ENCODE measurements at regions of chr3 and their contacts with region 1.

Region 1: GRCh38 chr3:170811928-170812591 is 57.9 kb downstream of the RPL22L1 start:
- DNase-seq: peak; percentile 61
- H3K4me3 ChIP-seq: no peak overlapping the region
- H3K27ac ChIP-seq: no peak overlapping the region
- H3K27me3 ChIP-seq: no peaks in the 10 kb centered on the region
- CTCF ChIP-seq: peak; percentile 92

Region 2: GRCh38 chr3:170414202-170414663 is 397.8 kb before region 1 on chr3:
- CTCF ChIA-PET with region 1: interaction called, 366 read pairs
- POLR2A ChIA-PET with region 1: interaction called, 4 read pairs
- DNase-seq: peak; percentile 82
- H3K4me3 ChIP-seq: no peak overlapping the region
- H3K27ac ChIP-seq: no peak overlapping the region
- H3K27me3 ChIP-seq: no peaks in the 10 kb centered on the region
- CTCF ChIP-seq: peak; percentile 100

Region 3: DNA sequence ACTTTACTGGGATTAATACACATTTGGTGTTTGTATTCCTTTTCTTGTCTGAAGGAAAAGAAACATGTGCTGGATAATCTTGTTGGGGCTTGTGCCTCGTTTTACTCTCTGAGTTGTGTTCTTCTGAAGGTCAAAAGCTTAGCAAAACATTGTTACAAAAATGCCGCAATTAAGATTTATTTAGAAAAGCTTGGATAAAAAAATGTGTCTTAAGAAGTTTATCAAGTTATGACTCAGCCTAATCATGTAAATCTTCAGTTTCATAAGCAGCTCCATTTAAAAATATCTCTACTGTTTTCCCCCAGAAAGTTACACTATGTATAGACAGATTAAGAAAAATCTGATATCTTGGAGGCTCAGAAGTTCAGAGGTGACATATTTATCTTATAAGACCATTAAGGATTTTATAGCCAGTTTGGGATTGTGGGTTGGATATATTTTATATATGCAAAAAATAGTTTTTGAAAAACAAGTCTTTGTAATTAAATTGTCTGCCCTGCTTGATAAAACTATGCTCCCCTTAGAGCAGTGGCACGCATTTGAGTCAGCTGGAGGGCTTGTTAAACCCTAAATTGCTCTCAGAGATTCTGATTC is 336.9 kb before region 1 on chr3:
- CTCF ChIA-PET with region 1: interaction called, 13 read pairs
- POLR2A ChIA-PET with region 1: no interaction called
- DNase-seq: peak; percentile 27
- H3K4me3 ChIP-seq: no peak overlapping the region
- H3K27ac ChIP-seq: no peak overlapping the region
- H3K27me3 ChIP-seq: no peaks in the 10 kb centered on the region
- CTCF ChIP-seq: no peak

Region 4: DNA sequence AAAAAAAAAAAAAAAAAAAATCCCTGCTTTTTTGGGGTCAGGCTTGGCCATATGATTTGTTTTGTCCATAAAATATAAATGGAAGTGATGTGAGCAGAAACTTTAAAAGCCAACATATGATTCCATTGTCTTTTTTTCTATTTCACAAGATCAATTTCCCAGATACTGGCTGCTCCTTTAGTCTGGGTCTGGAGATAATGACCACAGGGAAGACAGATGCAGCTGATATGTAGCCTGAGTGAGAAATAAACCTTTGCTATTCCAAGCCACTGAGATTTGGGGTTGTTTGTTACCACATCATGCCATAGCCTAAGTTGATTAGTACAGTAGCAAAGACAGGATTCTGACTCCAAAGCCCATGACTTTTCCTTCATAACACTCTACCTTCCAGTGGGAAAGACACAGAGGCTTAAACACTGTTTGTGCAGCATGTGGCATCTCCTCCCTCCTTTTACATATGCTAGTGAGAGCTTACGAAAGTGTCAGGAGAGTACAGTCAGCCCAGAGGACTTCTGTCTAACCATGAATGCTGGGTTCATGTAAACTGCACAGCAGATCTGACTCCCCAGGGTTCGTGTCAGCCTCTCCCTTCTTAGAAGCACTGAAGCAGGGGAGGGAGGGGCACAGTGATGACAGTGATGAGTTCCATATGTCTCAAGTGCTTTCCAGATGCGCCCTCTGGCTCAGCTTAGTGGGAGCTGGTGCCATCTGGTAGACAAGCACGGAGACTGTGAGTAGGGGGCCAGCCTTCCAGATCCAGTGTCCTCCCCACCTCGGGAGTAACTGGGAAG is 189.5 kb before region 1 on chr3:
- CTCF ChIA-PET with region 1: interaction called, 10 read pairs
- POLR2A ChIA-PET with region 1: no interaction called
- DNase-seq: peak; percentile 98
- H3K4me3 ChIP-seq: no peak overlapping the region
- H3K27ac ChIP-seq: peak overlapping the region; percentile 86
- H3K27me3 ChIP-seq: no peaks in the 10 kb centered on the region
- CTCF ChIP-seq: no peak

Region 5: DNA sequence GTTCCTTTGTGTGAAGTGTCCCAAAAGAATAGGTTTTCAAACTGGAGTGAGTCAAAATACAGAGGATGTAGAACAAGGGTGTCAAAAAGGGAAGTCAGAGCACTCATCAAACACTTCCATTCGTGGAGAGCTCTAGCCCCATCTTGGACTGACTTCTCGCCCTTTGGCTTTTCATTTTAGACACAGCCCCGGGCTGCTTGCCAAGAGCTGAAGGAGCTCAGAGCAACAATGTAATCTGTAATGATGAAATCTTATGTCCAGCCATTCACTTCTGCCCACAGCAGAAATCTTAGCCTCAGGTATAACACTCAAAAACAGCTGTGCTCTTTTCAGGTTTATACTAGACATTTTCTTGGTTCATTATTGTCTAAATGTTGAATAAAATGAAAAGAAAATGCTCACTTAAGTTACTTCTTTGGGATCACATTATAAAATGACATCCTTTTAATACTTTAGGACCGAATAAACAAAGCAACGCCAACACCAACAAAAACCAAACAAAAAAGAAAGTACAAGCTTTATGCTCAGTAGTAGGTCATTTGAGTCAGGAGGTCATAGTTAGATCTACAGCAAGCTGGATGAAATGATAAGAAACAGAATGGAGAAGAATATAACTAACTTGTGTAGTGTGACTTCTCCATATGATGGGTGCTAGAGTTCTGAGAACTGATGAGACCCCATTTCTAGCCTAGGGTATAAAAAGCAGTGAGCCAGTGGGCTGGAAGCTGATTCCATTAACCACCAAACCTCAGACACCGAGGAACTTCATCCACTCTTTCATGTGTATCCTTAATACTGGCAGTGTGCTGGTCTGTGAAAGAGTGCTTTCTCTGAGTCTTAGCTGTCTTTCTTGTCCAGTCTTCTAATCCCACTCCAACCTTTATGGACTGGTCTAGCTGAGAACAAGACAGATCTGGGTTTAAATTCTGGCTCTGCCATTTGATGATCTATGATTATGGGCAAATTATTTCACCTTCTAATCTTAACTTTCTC is 94.4 kb before region 1 on chr3:
- CTCF ChIA-PET with region 1: interaction called, 23 read pairs
- POLR2A ChIA-PET with region 1: no interaction called
- DNase-seq: no peak
- H3K4me3 ChIP-seq: no peak overlapping the region
- H3K27ac ChIP-seq: no peak overlapping the region
- H3K27me3 ChIP-seq: no peaks in the 10 kb centered on the region
- CTCF ChIP-seq: no peak

Region 6: GRCh38 chr3:170772175-170772574 is 39.9 kb before region 1 on chr3:
- CTCF ChIA-PET with region 1: no interaction called
- POLR2A ChIA-PET with region 1: no interaction called
- DNase-seq: no peak
- H3K4me3 ChIP-seq: no peak overlapping the region
- H3K27ac ChIP-seq: no peak overlapping the region
- H3K27me3 ChIP-seq: no peaks in the 10 kb centered on the region
- CTCF ChIP-seq: no peak

Region 7: DNA sequence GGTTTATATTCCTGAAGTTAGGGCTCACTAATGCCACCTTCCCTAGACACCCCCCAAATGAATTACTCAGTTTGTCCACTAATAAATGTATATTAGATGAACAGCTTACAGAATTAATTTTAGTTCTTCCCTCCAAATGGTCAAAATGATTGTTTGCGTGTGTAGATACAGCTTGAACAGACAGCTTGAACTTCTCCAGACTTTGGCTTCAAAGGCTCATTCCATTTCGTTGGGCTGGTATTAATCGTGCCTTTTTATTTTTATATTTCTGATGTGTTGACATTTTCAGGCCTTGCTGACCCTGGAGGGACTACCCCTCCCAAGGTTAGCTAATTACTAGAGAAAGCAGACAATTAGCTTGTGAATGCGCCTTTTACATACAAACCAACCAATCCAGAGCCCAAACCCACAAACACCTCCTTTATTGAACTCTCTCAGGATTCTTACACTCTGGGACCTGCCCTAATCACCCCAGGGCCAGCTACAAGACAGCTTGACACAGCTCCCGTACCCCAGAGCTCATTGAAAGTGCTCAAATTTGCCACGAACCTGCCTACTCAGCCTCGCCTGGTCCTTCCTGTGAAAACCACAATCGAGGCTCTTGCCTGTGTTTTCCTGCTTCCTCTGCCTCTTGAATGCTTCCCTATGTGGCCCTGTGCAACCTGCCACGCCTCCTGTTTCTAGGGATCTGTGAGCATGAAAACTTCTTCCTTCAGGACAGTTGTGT is 17.6 kb after region 1 on chr3:
- CTCF ChIA-PET with region 1: interaction called, 24 read pairs
- POLR2A ChIA-PET with region 1: no interaction called
- DNase-seq: no peak
- H3K4me3 ChIP-seq: no peak overlapping the region
- H3K27ac ChIP-seq: no peak overlapping the region
- H3K27me3 ChIP-seq: peaks cover 2% of the 10 kb centered on the region
- CTCF ChIP-seq: no peak

Region 8: GRCh38 chr3:170848292-170848917 is 36.3 kb after region 1 on chr3:
- CTCF ChIA-PET with region 1: interaction called, 60 read pairs
- POLR2A ChIA-PET with region 1: no interaction called
- DNase-seq: no peak
- H3K4me3 ChIP-seq: no peak overlapping the region
- H3K27ac ChIP-seq: no peak overlapping the region
- H3K27me3 ChIP-seq: no peaks in the 10 kb centered on the region
- CTCF ChIP-seq: peak; percentile 50